Activated CD8-positive, alpha-beta T cell treated with anti-CD3 and anti-CD28 coated beads for 36 hours (primary cell): ENCODE measurements at regions of chr11 and their contacts with region 1.

Region 1: GRCh38 chr11:60831143-60831500 is 10.8 kb upstream of the CCDC86 start:
- DNase-seq: peak; percentile 90
- ATAC-seq: peak; percentile 95
- H3K4me3 Mint-ChIP-seq: no peak overlapping the region
- H3K27ac Mint-ChIP-seq: no peak overlapping the region
- H3K4me1 Mint-ChIP-seq: peaks cover 2% of the 10 kb centered on the region
- H3K27me3 Mint-ChIP-seq: peaks cover 1% of the 10 kb centered on the region
- CTCF ChIP-seq: peak; percentile 91

Region 2: GRCh38 chr11:60775420-60775961 is 55.6 kb before region 1 on chr11:
- CTCF ChIA-PET with region 1: interaction called, 38 read pairs
- POLR2A ChIA-PET with region 1: interaction called, 3 read pairs
- intact Hi-C with region 1: no loop called
- DNase-seq: peak; percentile 92
- ATAC-seq: peak; percentile 98
- H3K4me3 Mint-ChIP-seq: no peak overlapping the region
- H3K27ac Mint-ChIP-seq: no peak overlapping the region
- H3K4me1 Mint-ChIP-seq: peaks cover 11% of the 10 kb centered on the region
- H3K27me3 Mint-ChIP-seq: no peaks in the 10 kb centered on the region
- CTCF ChIP-seq: peak; percentile 78

Region 3: GRCh38 chr11:60848714-60849151 is 17.6 kb after region 1 on chr11:
- CTCF ChIA-PET with region 1: interaction called, 51 read pairs
- POLR2A ChIA-PET with region 1: interaction called, 3 read pairs
- intact Hi-C with region 1: no loop called
- DNase-seq: no peak
- ATAC-seq: no peak
- H3K4me3 Mint-ChIP-seq: no peak overlapping the region
- H3K27ac Mint-ChIP-seq: no peak overlapping the region
- H3K4me1 Mint-ChIP-seq: peaks cover 22% of the 10 kb centered on the region
- H3K27me3 Mint-ChIP-seq: no peaks in the 10 kb centered on the region
- CTCF ChIP-seq: no peak

Region 4: DNA sequence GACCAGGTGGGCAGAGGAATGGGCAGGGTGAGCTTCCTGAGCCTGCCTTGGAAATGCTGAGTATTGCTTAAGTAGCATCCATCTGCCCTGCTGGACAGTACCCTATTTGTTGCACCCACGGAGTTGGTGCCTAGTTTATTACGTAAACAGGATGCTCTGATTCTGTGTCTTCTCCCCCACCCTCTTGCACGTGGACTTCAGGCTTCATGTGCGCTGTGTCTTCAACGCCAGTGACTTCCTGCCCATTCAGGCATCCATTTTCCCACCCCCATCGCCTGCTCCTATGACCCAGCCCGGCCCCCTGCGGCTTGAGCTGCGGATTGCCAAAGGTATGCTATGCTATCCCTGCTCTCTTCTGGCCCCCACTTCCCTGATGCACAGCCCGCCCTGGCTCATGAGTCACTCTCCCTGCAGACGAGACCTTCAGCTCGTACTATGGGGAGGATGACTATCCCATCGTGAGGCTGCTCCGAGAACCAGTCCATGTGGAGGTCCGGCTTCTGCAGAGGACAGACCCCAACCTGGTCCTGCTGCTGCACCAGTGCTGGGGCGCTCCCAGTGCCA is 41.9 kb after region 1 on chr11:
- CTCF ChIA-PET with region 1: interaction called, 37 read pairs
- POLR2A ChIA-PET with region 1: no interaction called
- intact Hi-C with region 1: no loop called
- DNase-seq: no peak
- ATAC-seq: no peak
- H3K4me3 Mint-ChIP-seq: no peak overlapping the region
- H3K27ac Mint-ChIP-seq: no peak overlapping the region
- H3K4me1 Mint-ChIP-seq: peaks cover 33% of the 10 kb centered on the region
- H3K27me3 Mint-ChIP-seq: no peaks in the 10 kb centered on the region
- CTCF ChIP-seq: no peak

Region 5: GRCh38 chr11:60899046-60899936 is 68.2 kb after region 1 on chr11:
- CTCF ChIA-PET with region 1: interaction called, 62 read pairs
- POLR2A ChIA-PET with region 1: interaction called, 4 read pairs
- intact Hi-C with region 1: no loop called
- DNase-seq: peak; percentile 44
- ATAC-seq: peak; percentile 96
- H3K4me3 Mint-ChIP-seq: no peak overlapping the region
- H3K27ac Mint-ChIP-seq: peak overlapping the region; percentile 35
- H3K4me1 Mint-ChIP-seq: peaks cover 12% of the 10 kb centered on the region
- H3K27me3 Mint-ChIP-seq: no peaks in the 10 kb centered on the region
- CTCF ChIP-seq: peak; percentile 100

Region 6: GRCh38 chr11:60913793-60914632 is 82.9 kb after region 1 on chr11 and contains the start of gene TMEM109:
- CTCF ChIA-PET with region 1: interaction called, 11 read pairs
- POLR2A ChIA-PET with region 1: interaction called, 3 read pairs
- intact Hi-C with region 1: no loop called
- DNase-seq: peak; percentile 91
- ATAC-seq: peak; percentile 72
- H3K4me3 Mint-ChIP-seq: peak within 1 kb of the TSS; percentile 90
- H3K27ac Mint-ChIP-seq: peak within 1 kb of the TSS; percentile 97
- H3K4me1 Mint-ChIP-seq: peaks cover 71% of the 10 kb centered on the region
- H3K27me3 Mint-ChIP-seq: no peaks in the 10 kb centered on the region
- CTCF ChIP-seq: no peak
- total RNA-seq, gene TMEM109: 93.2 to 101 TPM